Mammary epithelial cell (primary cell): ENCODE measurements at regions of chr14 and their contacts with region 1.

Region 1: DNA sequence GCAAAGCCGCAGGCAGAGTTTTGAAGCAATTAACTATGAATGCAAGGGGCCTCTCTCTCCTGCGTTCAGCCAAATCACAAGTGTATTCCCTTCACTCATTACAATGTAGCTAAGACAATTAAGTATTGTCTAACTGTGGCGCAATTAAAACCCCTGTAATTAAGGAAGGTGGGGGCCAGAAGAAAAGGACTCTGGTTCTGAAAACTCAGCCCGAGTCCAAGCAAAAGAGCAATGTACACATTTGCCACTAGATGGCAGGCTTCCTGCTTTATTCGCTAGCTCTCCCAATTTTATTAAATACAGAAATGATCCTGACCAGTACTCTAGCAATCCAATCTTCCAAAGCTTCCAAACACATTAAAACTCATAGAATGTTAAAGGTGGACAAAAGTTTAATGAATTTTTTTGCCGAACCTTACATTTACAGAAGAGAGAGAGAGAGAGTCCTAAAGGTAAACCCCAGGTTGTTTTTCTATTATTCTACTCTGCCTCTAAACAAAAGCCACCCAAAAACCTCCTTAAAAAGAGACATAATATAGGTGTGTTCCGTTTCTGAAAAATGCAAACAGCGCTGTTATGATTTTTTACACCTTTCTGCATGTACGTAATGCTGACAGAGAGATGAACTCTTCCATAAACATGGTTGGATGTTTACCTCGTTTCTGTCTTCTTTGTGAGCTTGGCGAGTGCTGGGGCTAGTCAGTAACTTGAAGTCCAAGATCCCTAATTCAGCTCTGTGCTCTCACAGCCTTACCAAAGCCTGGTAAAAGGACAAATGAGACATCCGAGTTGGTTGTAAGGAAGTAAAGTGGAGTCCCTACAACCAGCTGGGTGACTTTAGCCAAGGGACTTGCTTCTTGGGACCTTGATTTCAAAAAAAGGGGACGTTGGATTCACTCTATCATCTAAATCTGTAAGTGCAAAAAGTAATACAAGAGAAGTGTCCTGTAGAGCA is 50.9 kb upstream of the VASH1 start:
- DNase-seq: peak; percentile 20
- H3K4me3 ChIP-seq: no peak overlapping the region
- H3K27ac ChIP-seq: no peak overlapping the region
- H3K4me1 ChIP-seq: no peaks in the 10 kb centered on the region
- H3K27me3 ChIP-seq: no peaks in the 10 kb centered on the region
- CTCF ChIP-seq: peak; percentile 69 to 77

Region 2: DNA sequence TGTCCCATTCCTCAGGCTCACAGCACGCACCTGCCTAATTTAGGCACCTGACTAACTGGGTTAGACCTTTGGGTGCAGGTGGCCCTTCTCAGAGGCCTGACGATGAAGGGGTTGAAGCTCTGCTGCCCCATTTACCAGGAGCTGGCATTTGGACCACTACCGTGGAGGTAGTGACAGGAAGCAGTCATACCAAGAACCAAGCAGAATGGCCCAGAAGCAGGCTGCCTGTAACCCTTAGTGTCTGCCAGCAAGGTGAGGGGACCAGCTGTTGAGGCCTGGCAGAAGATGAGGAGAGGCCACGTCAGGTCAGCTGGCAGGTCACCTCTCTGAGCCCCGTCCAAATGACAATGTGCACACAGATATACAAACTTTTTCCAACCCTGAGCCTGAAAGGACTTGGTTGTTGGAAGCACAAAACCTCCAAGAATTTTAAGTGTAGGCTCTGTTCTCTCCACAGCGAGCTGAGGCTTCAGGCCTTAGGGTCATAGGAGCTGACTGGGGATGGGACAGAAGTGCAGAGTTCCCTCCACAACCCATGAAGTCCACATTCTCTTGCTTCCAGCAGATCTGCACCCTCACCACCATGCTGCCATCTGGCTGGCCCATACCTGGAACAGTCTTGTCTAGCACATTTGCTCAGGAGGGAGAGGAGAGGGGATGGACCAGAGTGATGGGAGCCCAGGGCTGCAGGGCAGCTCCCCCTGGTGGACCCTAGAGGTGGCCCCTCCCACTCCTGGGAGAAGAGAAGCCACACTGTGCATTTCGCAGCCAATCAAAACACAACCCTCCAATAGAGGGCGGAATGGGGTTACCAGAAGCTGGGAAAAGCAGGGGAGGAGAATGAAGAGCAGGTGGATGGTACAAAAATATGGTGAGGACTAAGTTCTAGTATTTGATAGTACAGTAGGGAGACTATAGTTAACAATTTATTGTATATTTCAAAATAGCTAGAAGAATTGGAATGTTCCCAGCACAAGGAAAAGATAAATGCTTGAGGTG is 74.2 kb after region 1 on chr14:
- CTCF ChIA-PET with region 1: interaction called, 10 read pairs
- dilution Hi-C with region 1: no loop called
- in situ Hi-C with region 1: no loop called
- intact Hi-C with region 1: loop called (anchors 2 kb)
- DNase-seq: peak; percentile 57
- H3K4me3 ChIP-seq: no peak overlapping the region
- H3K27ac ChIP-seq: no peak overlapping the region
- H3K4me1 ChIP-seq: peaks cover 16% of the 10 kb centered on the region
- H3K27me3 ChIP-seq: no peaks in the 10 kb centered on the region
- CTCF ChIP-seq: peak; percentile 64 to 69

Region 3: GRCh38 chr14:76810953-76811400 is 100.6 kb after region 1 on chr14:
- CTCF ChIA-PET with region 1: no interaction called
- dilution Hi-C with region 1: no loop called
- in situ Hi-C with region 1: no loop called
- intact Hi-C with region 1: loop called (anchors 1 kb)
- DNase-seq: peak; percentile 26
- H3K4me3 ChIP-seq: peak overlapping the region in 2 of 3 experiments; percentile 1 to 86
- H3K27ac ChIP-seq: no peak overlapping the region
- H3K4me1 ChIP-seq: peaks cover 14% of the 10 kb centered on the region
- H3K27me3 ChIP-seq: no peaks in the 10 kb centered on the region
- CTCF ChIP-seq: peak; percentile 9 to 57